ENCODE measurements at regions of chr10 and their contacts with region 1.

Region 1: GRCh38 chr10:129030996-129031843 is 435.8 kb upstream of the MGMT start:
- DNase-seq: peak; percentile 68
- H3K4me3 ChIP-seq: no peak overlapping the region
- H3K27ac ChIP-seq: no peak overlapping the region
- H3K4me1 ChIP-seq: peaks cover 18% of the 10 kb centered on the region
- H3K27me3 ChIP-seq: peaks cover 0 to 3% of the 10 kb centered on the region in 2 experiments
- CTCF ChIP-seq: peak; percentile 94 to 96
- POLR2A ChIP-seq: no peak

Region 2: GRCh38 chr10:128596906-128597305 is 434.3 kb before region 1 on chr10:
- CTCF ChIA-PET with region 1: no interaction called
- POLR2A ChIA-PET with region 1: no interaction called
- dilution Hi-C with region 1: no loop called
- intact Hi-C with region 1: no loop called
- DNase-seq: no peak
- H3K4me3 ChIP-seq: no peak overlapping the region
- H3K27ac ChIP-seq: no peak overlapping the region
- H3K4me1 ChIP-seq: no peaks in the 10 kb centered on the region
- H3K27me3 ChIP-seq: no peaks in the 10 kb centered on the region
- CTCF ChIP-seq: no peak
- POLR2A ChIP-seq: no peak

Region 3: DNA sequence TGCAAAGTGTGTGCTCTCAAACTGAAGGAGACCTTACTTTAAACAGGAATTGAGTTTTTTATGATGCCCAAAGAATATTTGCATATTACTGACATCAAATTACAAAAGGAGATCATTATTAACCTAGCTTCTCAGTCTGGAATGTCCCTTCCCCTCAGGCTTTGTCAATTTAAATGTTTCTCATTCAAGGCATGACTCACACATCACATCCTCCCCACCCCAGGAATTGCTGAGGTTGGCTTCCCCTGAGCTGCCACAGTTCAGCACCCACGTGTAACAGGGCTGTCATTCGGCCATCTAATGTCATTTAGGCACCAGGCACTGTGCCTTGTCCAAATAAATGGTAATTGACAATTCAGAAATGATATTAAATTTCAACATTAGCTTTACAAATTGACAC is 129.9 kb after region 1 on chr10:
- CTCF ChIA-PET with region 1: no interaction called
- POLR2A ChIA-PET with region 1: no interaction called
- dilution Hi-C with region 1: no loop called
- intact Hi-C with region 1: loop called (anchors 1 kb)
- DNase-seq: peak; percentile 2
- H3K4me3 ChIP-seq: no peak overlapping the region
- H3K27ac ChIP-seq: no peak overlapping the region
- H3K4me1 ChIP-seq: no peaks in the 10 kb centered on the region
- H3K27me3 ChIP-seq: no peaks in the 10 kb centered on the region
- CTCF ChIP-seq: no peak
- POLR2A ChIP-seq: no peak

Region 4: GRCh38 chr10:129416956-129417765 is 385.9 kb after region 1 on chr10:
- CTCF ChIA-PET with region 1: no interaction called
- POLR2A ChIA-PET with region 1: no interaction called
- dilution Hi-C with region 1: no loop called
- intact Hi-C with region 1: loop called (anchors 1 kb)
- DNase-seq: peak; percentile 59
- H3K4me3 ChIP-seq: no peak overlapping the region
- H3K27ac ChIP-seq: peak overlapping the region; percentile 62
- H3K4me1 ChIP-seq: peaks cover 17% of the 10 kb centered on the region
- H3K27me3 ChIP-seq: no peaks in the 10 kb centered on the region
- CTCF ChIP-seq: no peak
- POLR2A ChIP-seq: no peak

Region 5: DNA sequence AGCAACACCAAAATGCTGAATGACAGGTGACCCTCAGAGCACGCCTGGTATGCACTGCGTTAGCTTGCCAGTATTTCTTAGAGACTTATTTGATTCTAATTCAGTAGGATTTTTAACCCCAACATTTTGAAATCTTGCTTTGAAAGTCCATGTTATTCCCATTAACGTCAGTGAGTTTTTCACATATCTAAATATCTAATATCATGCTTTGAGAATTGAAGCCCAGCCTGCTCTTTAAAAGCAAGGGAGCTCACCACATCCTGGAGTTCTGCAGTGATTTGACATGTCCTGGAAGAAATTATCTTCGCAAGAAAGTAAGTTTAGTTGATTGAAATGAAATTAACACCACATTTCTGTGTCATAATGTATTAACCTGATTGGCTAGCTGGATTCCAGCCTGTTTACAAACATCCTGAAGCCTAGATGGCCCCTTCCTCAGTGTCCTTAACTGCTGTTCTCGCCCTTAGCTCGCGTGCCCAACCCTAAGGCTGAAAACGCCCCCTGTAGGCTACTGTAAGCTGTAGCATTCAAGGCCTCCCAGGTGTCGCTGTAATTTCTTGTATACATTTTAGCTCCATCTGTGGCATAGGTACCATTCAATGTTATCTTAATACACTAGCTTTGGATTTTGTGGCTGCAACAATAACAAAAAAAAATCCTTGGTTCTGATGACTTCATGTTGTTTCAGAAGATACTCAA is 627.3 kb after region 1 on chr10:
- CTCF ChIA-PET with region 1: no interaction called
- POLR2A ChIA-PET with region 1: no interaction called
- dilution Hi-C with region 1: no loop called
- intact Hi-C with region 1: loop called (anchors 10 kb)
- DNase-seq: no peak
- H3K4me3 ChIP-seq: no peak overlapping the region
- H3K27ac ChIP-seq: no peak overlapping the region
- H3K4me1 ChIP-seq: no peaks in the 10 kb centered on the region
- H3K27me3 ChIP-seq: no peaks in the 10 kb centered on the region
- CTCF ChIP-seq: no peak
- POLR2A ChIP-seq: no peak

Region 6: GRCh38 chr10:130127364-130128061 is 1096.3 kb after region 1 on chr10:
- CTCF ChIA-PET with region 1: interaction called, 4 read pairs
- POLR2A ChIA-PET with region 1: no interaction called
- dilution Hi-C with region 1: no loop called
- intact Hi-C with region 1: loop called (anchors 2 kb)
- DNase-seq: peak; percentile 76
- H3K4me3 ChIP-seq: no peak overlapping the region
- H3K27ac ChIP-seq: no peak overlapping the region
- H3K4me1 ChIP-seq: no peaks in the 10 kb centered on the region
- H3K27me3 ChIP-seq: peaks cover 5 to 8% of the 10 kb centered on the region in 2 experiments
- CTCF ChIP-seq: peak; percentile 73
- POLR2A ChIP-seq: no peak